Left colon (tissue), 2 donors: ENCODE measurements at regions of chr11 and their contacts with region 1.

Region 1: DNA sequence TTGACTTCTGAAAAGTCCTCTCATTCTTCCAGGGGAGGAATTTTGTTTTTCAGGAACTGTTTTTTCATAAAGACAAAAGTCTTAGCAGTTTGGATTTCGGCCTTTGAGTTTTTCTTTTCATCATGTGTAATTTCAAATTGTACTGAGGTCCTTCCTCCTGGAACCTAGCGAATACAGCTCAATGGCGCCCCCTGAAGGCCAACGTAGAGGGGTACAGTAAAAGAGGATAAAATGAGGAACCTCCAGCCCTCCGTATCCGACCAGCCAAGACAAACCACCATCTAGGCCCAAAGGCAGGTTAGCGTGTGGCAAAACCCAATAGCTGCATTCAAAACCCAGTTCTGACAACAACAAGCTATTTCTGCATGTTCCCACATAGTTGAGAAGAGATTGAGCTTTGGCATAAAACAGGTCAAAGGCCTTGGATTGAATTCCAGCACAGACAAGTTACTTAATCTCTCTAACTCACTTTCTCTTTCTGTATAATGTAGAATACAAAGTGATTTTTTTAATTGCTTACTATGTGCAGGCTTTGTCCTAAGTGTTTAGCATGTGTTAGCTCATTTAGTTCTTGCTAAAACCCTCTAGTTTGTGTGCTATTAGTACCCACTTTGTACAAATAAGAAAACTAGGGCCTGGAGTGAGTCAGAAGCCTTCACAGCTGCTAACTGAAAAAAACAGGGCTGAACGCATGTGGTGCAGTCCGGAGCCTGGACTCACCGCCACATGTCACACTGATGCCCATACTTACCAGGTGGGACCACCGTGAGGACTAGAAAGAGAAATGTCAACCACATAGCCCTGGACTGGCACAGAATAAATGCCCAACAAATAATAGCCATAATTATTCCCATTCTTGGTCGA is 43.2 kb upstream of the ETS1 start:
- DNase-seq: peak; percentile 86 to 93
- ATAC-seq: peak; percentile 96

Region 2: DNA sequence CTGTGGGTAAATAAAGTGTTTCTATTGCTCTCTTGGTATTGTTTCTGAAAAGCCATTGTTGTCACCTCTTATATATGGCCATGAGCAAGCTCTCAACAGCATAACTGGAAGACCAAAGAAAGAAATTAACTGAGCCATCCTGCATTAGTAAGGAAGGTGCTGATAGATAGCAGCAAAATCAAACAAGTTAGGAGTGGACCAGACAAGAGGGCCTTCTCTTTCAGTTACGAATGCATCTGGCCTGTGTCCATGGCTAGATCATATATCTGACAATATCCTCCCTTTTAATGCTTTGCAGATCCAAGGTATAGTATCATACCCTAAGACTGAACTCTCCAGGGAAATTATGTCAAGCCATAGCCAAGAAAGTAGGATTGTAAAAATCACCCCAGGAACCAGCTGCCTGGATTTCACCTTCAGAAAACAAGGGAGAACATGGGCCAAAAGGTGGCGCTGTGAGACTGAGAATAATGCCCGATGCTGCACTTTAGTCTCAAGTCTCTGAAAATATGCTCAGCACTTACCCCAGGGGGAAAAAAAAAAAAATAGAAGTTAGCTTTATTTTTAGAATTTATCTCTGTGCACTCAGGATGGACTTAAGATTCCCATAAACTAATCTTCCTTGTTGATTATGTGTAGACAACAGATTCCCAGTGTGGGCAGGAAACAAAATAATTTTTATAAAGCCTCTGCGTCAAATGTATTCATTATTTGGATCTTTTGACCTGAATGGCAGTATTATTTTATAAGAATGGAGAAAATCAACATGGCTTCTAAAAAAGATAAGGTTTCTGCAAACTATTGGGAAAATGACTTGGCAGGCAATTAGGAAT is 458.3 kb before region 1 on chr11:
- intact Hi-C with region 1: loop called (anchors 5 to 10 kb)
- DNase-seq: peak; percentile 60 to 91
- ATAC-seq: peak; percentile 76

Region 3: DNA sequence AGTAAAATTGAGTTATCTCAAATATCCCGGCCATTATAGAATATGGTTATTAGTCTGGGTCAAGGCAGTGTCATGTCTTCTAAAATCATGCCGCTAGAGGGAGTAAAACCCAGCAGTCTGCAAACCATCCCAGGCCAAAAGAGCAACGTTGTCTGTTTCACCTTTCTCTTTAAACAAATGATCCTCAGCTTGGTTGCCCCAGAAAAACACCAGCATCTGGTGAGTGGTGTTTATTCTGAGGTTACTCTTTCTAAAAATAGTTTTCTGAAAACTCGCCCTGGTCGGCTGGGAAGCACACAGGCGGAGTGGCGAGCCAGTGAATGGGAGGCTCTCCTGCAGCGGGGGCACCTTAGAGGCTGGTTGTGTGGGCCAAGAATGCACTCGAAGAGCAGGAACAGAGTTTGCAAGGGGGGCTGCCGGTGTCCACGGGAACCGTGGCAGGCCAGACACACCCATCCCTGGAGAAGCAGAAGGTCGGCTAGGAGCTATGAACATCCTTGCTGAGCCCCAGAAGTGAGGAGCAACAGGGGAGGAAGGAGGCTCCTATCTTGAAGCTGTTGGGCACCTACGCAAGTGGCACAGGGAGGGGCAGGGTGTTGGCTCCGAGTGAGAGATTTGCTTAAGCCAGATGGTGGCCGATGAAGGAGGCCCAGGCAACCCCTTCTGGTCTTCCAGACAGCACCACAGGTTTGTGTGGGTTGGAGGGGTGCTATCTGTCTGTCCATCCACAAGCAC is 340.3 kb before region 1 on chr11:
- intact Hi-C with region 1: loop called (anchors 2 to 10 kb)
- DNase-seq: peak; percentile 77 to 81
- ATAC-seq: peak; percentile 84

Region 4: DNA sequence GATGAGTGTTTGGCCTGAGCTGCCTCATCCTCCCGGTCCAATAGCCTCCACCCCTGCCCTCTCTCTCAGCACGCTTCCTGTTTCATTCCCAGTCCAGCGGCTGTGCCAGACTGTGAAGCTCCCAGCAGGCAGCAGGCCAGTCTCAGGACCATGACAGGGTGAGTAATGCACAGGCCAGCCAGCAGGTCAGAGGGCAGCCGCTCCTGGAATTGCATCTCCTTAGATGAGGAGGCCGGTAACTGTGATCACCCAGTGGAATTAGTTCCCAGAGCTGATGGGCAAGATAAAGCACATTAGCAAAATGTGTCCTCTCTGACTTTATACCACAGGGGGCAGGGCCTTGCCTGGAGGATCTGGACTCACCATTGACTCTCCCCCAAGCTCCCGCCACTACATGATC is 294.4 kb before region 1 on chr11:
- intact Hi-C with region 1: no loop called
- DNase-seq: peak in 1 of 2 donors; percentile 34
- ATAC-seq: peak; percentile 44

Region 5: GRCh38 chr11:128553662-128554362 is 76.8 kb before region 1 on chr11:
- intact Hi-C with region 1: loop called in 1 of 2 experiments (anchors 2 kb)
- DNase-seq: no peak
- ATAC-seq: no peak

Region 6: GRCh38 chr11:128653801-128654231 is 23.2 kb after region 1 on chr11:
- intact Hi-C with region 1: no loop called
- DNase-seq: peak; percentile 20 to 40
- ATAC-seq: peak; percentile 68

Region 7: DNA sequence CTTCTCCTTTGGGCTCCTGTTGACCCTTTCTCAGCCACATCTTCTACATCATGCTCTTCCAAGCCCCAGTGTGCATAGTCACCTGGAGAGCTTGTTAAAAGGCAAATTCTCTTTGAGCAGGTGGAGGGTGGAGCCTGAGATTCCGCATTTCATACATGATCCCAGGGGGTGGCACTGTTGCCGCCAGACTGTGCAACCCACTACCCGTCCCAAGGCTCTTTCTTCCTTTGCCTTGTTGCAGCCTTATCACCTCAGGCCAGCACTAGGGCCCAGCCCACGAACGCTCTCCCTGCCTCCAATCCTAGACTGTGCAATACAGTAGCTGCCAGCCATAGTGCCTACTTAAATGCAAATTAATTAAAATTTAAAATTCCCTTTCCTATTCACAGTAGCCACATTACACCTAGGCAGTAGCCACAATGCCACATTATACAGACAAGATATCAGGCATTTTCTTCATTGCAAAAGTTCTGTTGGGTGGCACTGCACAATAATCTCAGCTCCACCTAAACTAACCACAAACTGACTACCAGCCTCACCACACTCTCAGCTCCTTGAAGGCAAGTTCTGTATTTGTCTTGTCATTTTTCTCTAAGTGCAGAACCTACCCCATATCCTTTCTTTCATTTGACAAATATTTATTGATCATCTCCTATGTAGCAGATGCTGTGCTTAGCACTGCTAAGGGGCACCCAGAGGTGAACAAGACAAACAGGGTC is 256.0 kb after region 1 on chr11:
- intact Hi-C with region 1: no loop called
- DNase-seq: peak in 1 of 2 donors; percentile 34
- ATAC-seq: peak; percentile 66

Region 8: DNA sequence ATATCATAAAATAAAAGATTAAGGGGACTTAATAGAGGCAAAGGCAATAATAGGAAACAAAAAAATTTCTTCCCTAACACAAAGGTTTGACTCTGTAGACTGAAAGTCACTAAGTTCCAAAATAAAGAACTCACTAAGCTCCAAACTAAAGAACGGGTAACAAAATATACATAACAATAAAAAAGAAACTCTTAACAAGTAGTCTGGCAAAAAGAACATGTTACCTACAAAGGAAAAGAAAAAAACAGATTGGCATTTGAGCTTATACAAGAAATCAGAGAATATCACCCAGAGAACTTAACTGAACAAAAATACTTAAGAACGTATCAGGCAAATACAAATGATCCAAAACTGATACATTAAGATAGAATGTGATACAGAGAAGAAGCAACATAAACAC is 554.0 kb after region 1 on chr11:
- intact Hi-C with region 1: no loop called
- DNase-seq: no peak
- ATAC-seq: no peak